Endothelial cell of umbilical vein (primary cell): ENCODE measurements at regions of chr6 and their contacts with region 1.

Region 1: DNA sequence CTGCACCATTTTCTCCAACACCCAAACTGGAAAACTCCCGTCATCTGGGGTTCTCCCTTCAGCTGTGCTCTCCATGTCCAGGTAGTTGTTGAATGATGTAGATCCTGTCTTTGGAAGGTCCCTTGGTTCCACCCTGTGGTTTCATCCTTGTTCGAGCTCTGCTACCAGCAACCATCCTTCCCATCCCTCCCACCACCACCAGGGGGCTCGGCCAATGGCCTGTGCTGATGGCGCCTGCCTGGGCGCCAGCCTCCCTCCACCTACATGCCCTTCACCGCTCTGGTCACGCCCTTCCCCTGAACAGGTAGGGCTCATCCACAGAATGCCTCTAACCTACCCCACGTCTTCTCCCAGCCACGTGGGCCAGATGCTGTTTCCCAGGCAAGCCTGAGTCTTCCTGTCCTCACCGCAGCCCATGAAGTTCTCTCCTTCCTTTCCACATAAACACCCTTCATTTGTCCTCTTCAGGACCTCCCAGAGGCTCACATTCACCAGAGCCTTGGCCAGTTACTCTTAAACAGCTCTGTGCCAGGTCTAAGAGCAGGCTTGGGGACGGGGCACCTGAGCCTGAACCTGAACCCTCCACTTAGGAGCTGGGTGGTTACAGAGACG is 75.1 kb upstream of the DUSP22 start:
- DNase-seq: no peak
- H3K4me3 ChIP-seq: no peak overlapping the region
- H3K27ac ChIP-seq: no peak overlapping the region
- H3K4me1 ChIP-seq: peaks cover 2% of the 10 kb centered on the region
- H3K27me3 ChIP-seq: no peaks in the 10 kb centered on the region
- CTCF ChIP-seq: peak; percentile 18 to 59
- POLR2A ChIP-seq: no peak

Region 2: DNA sequence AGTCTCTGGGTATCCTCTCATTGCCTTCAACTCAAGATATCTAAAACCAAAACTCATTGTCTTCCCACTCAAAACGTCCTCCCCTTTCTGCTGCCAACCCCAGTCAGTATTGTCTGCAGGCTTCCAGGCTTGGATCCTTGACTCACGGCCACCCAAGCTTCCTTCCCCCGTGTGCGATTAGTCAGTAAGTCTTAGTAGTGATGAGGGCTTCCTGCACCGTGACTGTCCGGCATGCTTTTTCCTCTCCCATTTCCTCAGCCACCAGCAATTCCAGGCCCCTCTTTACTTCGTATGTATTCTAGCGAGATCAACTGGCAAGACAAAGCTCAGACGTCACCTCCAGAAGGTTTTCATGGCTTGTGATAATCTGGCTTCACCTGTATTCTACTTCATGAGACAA is 13.5 kb before region 1 on chr6:
- CTCF ChIA-PET with region 1: interaction called, 12 read pairs
- POLR2A ChIA-PET with region 1: no interaction called
- dilution Hi-C with region 1: no loop called
- intact Hi-C with region 1: no loop called
- DNase-seq: no peak
- H3K4me3 ChIP-seq: no peak overlapping the region
- H3K27ac ChIP-seq: no peak overlapping the region
- H3K4me1 ChIP-seq: no peaks in the 10 kb centered on the region
- H3K27me3 ChIP-seq: no peaks in the 10 kb centered on the region
- CTCF ChIP-seq: no peak
- POLR2A ChIP-seq: no peak

Region 3: GRCh38 chr6:259901-260508 is 42.9 kb after region 1 on chr6:
- CTCF ChIA-PET with region 1: no interaction called
- POLR2A ChIA-PET with region 1: no interaction called
- dilution Hi-C with region 1: no loop called
- intact Hi-C with region 1: no loop called
- DNase-seq: no peak
- H3K4me3 ChIP-seq: no peak overlapping the region
- H3K27ac ChIP-seq: no peak overlapping the region
- H3K4me1 ChIP-seq: no peaks in the 10 kb centered on the region
- H3K27me3 ChIP-seq: no peaks in the 10 kb centered on the region
- CTCF ChIP-seq: no peak
- POLR2A ChIP-seq: no peak

Region 4: DNA sequence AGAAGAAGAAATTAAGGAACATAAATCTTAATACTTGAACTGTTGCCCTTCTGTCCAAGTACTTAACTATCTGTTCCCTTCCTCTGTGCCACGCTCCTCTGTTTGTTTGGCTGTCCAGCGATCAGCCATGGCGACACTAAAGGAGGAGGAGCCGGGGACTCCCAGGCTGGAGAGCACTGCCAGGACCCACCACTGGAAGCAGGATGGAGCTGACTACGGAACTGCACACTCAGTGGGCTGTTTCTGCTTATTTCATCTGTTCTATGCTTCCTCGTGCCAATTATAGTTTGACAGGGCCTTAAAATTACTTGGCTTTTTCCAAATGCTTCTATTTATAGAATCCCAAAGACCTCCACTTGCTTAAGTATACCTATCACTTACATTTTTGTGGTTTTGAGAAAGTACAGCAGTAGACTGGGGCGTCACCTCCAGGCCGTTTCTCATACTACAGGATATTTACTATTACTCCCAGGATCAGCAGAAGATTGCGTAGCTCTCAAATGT is 191.5 kb after region 1 on chr6:
- CTCF ChIA-PET with region 1: interaction called, 27 read pairs
- POLR2A ChIA-PET with region 1: no interaction called
- dilution Hi-C with region 1: no loop called
- intact Hi-C with region 1: loop called (anchors 1 kb)
- DNase-seq: peak; percentile 26
- H3K4me3 ChIP-seq: no peak overlapping the region
- H3K27ac ChIP-seq: no peak overlapping the region
- H3K4me1 ChIP-seq: no peaks in the 10 kb centered on the region
- H3K27me3 ChIP-seq: peaks cover 3 to 4% of the 10 kb centered on the region in 2 experiments
- CTCF ChIP-seq: peak in 1 of 2 donors; percentile 1
- POLR2A ChIP-seq: no peak

Region 5: DNA sequence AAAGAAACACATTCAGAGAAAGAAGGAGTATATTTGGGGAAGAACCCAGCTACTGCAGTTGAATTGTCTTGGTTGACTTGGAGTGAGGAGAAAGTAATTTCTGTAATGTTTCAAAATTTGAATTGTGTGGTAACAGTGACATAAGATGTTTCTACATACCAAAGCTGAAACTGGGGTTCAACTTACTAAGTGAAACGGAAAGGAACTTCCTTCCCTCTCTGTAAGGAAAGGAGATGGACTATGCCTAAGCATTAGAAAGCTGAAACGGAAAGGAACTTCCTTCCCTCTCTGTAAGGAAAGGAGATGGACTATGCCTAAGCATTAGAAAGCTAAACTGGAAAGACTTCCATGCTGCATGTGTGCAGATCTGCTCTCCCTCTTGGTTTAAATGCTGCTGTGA is 393.7 kb after region 1 on chr6:
- CTCF ChIA-PET with region 1: no interaction called
- POLR2A ChIA-PET with region 1: no interaction called
- dilution Hi-C with region 1: no loop called
- intact Hi-C with region 1: no loop called
- DNase-seq: no peak
- H3K4me3 ChIP-seq: no peak overlapping the region
- H3K27ac ChIP-seq: no peak overlapping the region
- H3K4me1 ChIP-seq: peaks cover 7% of the 10 kb centered on the region
- H3K27me3 ChIP-seq: no peaks in the 10 kb centered on the region
- CTCF ChIP-seq: no peak
- POLR2A ChIP-seq: no peak